Colonic mucosa (tissue), 4 donors: ENCODE measurements at regions of chr1 and their contacts with region 1.

Region 1: GRCh38 chr1:202998836-202999750 is 8.1 kb upstream of the TMEM183A start:
- DNase-seq: peak; percentile 69
- H3K4me3 ChIP-seq: no peak overlapping the region
- H3K27ac ChIP-seq: no peak overlapping the region
- H3K4me1 ChIP-seq: no peaks in the 10 kb centered on the region
- H3K27me3 ChIP-seq: no peaks in the 10 kb centered on the region
- CTCF ChIP-seq: peak; percentile 82

Region 2: DNA sequence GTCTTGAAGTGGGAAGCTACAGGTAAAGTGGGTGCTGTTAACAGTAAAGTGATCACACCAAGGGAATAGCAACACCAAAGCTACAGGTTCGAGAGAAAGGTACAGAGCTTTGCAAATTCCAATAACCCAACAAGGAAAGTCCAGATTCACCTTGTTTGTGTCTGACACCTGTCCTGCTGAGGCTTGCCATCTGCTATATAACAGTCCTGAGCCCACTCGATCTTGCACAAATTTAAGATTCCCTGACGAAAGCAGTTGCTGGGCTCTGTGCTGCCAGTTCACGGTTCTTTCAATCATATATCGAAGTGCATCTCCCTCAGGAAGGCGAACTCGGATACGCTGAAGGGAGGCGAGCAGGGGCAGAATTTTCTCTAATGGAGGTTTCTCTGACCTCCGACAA is 265.8 kb before region 1 on chr1:
- intact Hi-C with region 1: loop called (anchors 10 kb)
- DNase-seq: no peak
- H3K4me3 ChIP-seq: no peak overlapping the region
- H3K27ac ChIP-seq: no peak overlapping the region
- H3K4me1 ChIP-seq: no peaks in the 10 kb centered on the region
- H3K27me3 ChIP-seq: no peaks in the 10 kb centered on the region
- CTCF ChIP-seq: no peak

Region 3: GRCh38 chr1:202926720-202927491 is 72.2 kb before region 1 on chr1 and contains the start of gene KLHL12:
- intact Hi-C with region 1: loop called (anchors 5 kb)
- DNase-seq: peak; percentile 98
- H3K4me3 ChIP-seq: peak within 1 kb of the TSS; percentile 83
- H3K27ac ChIP-seq: peak within 1 kb of the TSS; percentile 96
- H3K4me1 ChIP-seq: no peaks in the 10 kb centered on the region
- H3K27me3 ChIP-seq: no peaks in the 10 kb centered on the region
- CTCF ChIP-seq: peak; percentile 50
- total RNA-seq, gene KLHL12: 28.7 to 29.6 TPM

Region 4: GRCh38 chr1:203216274-203217138 is 217.4 kb after region 1 on chr1:
- intact Hi-C with region 1: no loop called
- DNase-seq: peak; percentile 68
- H3K4me3 ChIP-seq: no peak overlapping the region
- H3K27ac ChIP-seq: no peak overlapping the region
- H3K4me1 ChIP-seq: no peaks in the 10 kb centered on the region
- H3K27me3 ChIP-seq: no peaks in the 10 kb centered on the region
- CTCF ChIP-seq: peak; percentile 63